H1 (cell line): ENCODE measurements at regions of chr2 and their contacts with region 1.

Region 1: DNA sequence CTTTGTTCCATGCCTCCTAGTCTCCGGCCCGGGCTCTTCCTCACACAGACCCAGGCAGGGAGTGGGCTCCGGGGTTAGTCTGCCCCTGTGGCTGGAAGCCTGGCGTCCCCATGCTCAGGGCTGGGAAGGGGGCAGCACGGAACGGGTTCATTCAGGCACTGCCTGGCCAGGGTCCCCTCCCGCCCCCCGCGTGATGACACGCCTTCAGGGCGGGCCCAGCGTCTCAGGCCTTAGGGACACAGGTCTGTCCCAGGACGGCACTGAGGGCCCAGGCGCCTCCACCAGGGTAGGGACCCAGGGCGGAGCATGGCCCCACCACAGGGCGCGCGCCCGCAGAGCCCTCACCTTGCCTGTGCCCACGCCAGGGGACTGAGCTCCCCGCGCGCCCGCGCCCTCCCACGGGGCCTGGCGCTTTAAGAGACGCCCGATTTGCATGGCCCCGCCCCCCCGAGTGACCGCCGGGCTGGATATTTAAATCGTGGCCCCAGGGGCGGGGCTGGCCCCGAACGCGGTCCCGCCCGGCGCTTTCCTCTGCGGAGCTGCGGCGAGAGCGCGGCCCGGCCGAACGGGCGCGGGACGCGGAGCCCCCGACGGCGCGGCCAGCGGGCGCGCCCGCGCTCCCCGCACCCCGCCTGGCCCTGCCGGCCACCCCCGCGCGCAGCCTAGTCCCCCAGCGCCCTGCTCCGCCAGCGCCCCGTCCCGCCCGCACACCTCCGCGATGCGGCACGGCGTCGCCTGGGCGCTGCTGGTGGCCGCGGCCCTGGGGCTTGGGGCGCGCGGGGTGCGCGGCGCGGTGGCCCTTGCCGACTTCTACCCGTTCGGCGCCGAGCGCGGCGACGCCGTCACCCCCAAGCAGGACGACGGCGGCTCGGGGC is at the start of gene SNED1:
- DNase-seq: peak in 1 of 2 experiments; percentile 93
- H3K4me3 ChIP-seq: peak within 1 kb of the TSS; percentile 61 to 85 (median 72)
- H3K27ac ChIP-seq: 0 out of 2 replicates have a peak within 1 kb of the TSS, but pooled peaks have one; percentile 23
- H3K4me1 ChIP-seq: peaks cover 0 to 6% (median 2%) of the 10 kb centered on the region in 4 experiments; a peak in 3 of 7 replicates
- H3K27me3 ChIP-seq: peaks cover 5 to 27% (median 15%) of the 10 kb centered on the region in 4 experiments
- CTCF ChIP-seq: no peak; a peak in 1 of 4 replicates
- EP300 ChIP-seq: no peak
- POLR2A ChIP-seq: 0 out of 3 replicates have a peak, but pooled peaks of 1 of the 2 experiments have one; percentile 44
- RAD21 ChIP-seq: no peak; a peak in 1 of 4 replicates
- total RNA-seq, gene SNED1: 1.9 and 2.4 TPM in 2 replicates

Region 2: DNA sequence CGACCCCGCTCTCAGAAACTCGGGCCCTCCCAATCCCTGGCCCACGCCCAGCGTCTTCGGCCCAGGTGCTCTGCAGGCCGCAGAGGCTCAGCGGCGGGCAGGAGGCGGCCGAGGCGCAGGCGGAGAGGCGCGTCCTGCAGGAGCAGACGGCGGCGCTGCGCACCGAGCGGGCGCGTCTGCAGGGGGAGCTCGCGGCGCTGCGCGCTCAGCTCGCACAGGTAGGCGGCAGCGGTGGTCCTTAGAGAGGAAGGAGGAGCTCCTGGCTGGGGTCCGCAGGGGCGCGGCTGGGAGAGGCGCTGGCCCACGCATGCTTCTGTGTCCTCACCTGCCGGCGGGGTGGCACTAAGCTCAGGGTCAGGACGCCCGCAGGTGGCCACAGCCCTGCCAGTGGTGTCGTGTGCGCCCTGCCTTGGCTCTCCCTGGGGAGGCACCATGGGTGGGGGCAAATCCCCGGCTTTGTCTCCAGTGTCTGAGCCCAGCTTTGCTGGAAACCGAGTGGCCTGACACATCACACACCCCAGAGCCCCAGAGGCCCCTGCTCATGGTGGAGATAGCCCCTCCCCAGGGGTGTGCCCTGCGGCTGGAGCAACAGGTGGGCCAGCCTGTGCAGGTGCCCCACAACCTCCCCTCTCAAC is 14.9 kb before region 1 on chr2:
- CTCF ChIA-PET with region 1: interaction called, 16 read pairs
- POLR2A ChIA-PET with region 1: interaction called, 3 read pairs
- DNase-seq: peak; percentile 68 to 81
- H3K4me3 ChIP-seq: peak overlapping the region in 3 of 4 experiments; percentile 10 to 41 (median 19); a peak in 3 of 8 replicates
- H3K27ac ChIP-seq: no peak overlapping the region
- H3K4me1 ChIP-seq: peaks cover 0 to 3% (median 0%) of the 10 kb centered on the region in 4 experiments; a peak in 1 of 7 replicates
- H3K27me3 ChIP-seq: peaks cover 0 to 3% (median 3%) of the 10 kb centered on the region in 4 experiments; a peak in 3 of 7 replicates
- CTCF ChIP-seq: peak in 2 of 3 experiments; percentile 93 to 99; a peak in 3 of 4 replicates
- EP300 ChIP-seq: no peak
- POLR2A ChIP-seq: no peak
- RAD21 ChIP-seq: peak; percentile 63 to 81

Region 3: DNA sequence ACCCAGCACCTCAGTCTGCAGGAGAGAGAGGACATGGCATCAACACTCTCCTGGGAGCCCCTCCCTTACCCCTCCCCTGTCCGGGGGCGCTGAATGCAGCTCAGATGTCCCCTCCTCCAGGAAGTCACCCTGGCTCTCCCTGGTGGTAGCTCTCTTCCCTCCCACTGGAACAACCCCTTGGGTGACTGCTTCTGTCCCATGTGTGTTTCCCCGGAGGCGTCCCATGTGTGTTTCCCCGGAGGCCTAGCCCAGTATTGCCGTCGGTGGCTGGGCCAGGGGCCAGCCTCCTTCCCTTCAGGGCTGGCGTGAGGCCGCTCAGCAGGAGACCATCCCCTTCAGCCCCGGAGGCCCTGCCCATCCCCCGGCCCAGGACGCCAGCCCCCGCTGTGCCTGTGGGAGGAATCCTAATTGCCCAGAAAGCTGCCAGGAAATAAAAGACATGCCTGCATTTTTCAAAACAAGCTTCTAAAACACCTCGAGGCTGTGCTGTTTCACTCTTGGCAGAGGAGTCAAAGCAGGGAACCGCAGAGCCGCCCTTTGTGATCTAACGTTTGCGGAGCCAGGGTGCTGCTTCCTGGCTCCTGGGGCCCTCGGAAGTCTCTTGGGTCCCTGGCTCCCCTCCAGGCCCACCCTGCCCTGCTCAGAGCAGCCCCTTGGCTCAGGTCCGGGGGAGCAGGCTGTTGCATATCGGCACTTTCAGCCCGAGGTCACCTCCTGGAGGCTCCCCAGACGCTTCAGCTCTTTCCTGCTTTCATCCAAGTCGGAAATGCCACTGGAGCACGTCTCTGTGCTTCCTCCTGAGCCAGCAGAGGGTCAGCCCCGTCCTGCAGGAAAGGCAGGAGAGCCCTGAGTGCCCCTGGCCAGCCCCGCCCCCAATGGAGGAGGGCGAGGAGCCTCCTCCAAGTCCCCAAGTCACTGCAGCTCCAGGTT is 11.5 kb after region 1 on chr2:
- CTCF ChIA-PET with region 1: interaction called, 11 read pairs
- POLR2A ChIA-PET with region 1: interaction called, 7 read pairs
- DNase-seq: peak in 1 of 2 experiments; percentile 76
- H3K4me3 ChIP-seq: peak overlapping the region in 1 of 4 experiments; percentile 39; a peak in 4 of 8 replicates
- H3K27ac ChIP-seq: no peak overlapping the region
- H3K4me1 ChIP-seq: peaks cover 0 to 19% (median 15%) of the 10 kb centered on the region in 4 experiments; a peak in 6 of 7 replicates
- H3K27me3 ChIP-seq: no peaks in the 10 kb centered on the region
- CTCF ChIP-seq: no peak
- EP300 ChIP-seq: no peak
- POLR2A ChIP-seq: no peak
- RAD21 ChIP-seq: 0 out of 4 replicates have a peak, but pooled peaks of 1 of the 2 experiments have one; percentile 1